K562 (cell line): ENCODE measurements at regions of chr17 and their contacts with region 1.

Region 1: GRCh38 chr17:82518826-82519810 is at the start of gene FOXK2:
- DNase-seq: peak; percentile 96 to 100 (median 100)
- ATAC-seq: peak; percentile 97
- H3K4me3 ChIP-seq: peak within 1 kb of the TSS; percentile 94
- H3K27ac ChIP-seq: peak within 1 kb of the TSS; percentile 98
- H3K4me1 ChIP-seq: peaks cover 12 to 19% of the 10 kb centered on the region in 2 experiments; a peak in 4 of 5 replicates
- H3K27me3 ChIP-seq: no peaks in the 10 kb centered on the region
- CTCF ChIP-seq: no peak
- EP300 ChIP-seq: no peak
- POLR2A ChIP-seq: peak; percentile 58
- RAD21 ChIP-seq: no peak
- polyA plus RNA-seq, gene FOXK2: 3.0 to 4.2 TPM

Region 2: GRCh38 chr17:82283208-82283749 is 235.8 kb before region 1 on chr17:
- CTCF ChIA-PET with region 1: no interaction called
- POLR2A ChIA-PET with region 1: no interaction called
- in situ Hi-C with region 1: no loop called
- intact Hi-C with region 1: no loop called
- DNase-seq: peak in 2 of 4 experiments; percentile 50 to 54
- ATAC-seq: peak; percentile 17; the same call in 2 of the 3 replicates
- H3K4me3 ChIP-seq: no peak overlapping the region
- H3K27ac ChIP-seq: no peak overlapping the region
- H3K4me1 ChIP-seq: peaks cover 21 to 53% of the 10 kb centered on the region in 2 experiments
- H3K27me3 ChIP-seq: no peaks in the 10 kb centered on the region
- CTCF ChIP-seq: no peak
- EP300 ChIP-seq: no peak
- POLR2A ChIP-seq: no peak
- RAD21 ChIP-seq: no peak

Region 3: GRCh38 chr17:82457997-82458864 is 60.9 kb before region 1 on chr17 and contains the start of gene NARF:
- CTCF ChIA-PET with region 1: no interaction called
- POLR2A ChIA-PET with region 1: interaction called, 5 read pairs
- in situ Hi-C with region 1: no loop called
- intact Hi-C with region 1: loop called (anchors 1 kb)
- DNase-seq: peak; percentile 95 to 99 (median 97)
- ATAC-seq: peak; percentile 95
- H3K4me3 ChIP-seq: peak within 1 kb of the TSS; percentile 83
- H3K27ac ChIP-seq: peak within 1 kb of the TSS; percentile 97
- H3K4me1 ChIP-seq: peaks cover 49 to 67% of the 10 kb centered on the region in 2 experiments
- H3K27me3 ChIP-seq: no peaks in the 10 kb centered on the region
- CTCF ChIP-seq: no peak
- EP300 ChIP-seq: no peak
- POLR2A ChIP-seq: peak; percentile 98
- RAD21 ChIP-seq: peak; percentile 12 to 16; a peak in 2 of 4 replicates
- polyA plus RNA-seq, gene NARF: 60.4 to 114 TPM

Region 4: GRCh38 chr17:82468692-82469091 is 50.4 kb before region 1 on chr17:
- CTCF ChIA-PET with region 1: no interaction called
- POLR2A ChIA-PET with region 1: no interaction called
- in situ Hi-C with region 1: no loop called
- intact Hi-C with region 1: no loop called
- DNase-seq: no peak
- ATAC-seq: no peak
- H3K4me3 ChIP-seq: no peak overlapping the region
- H3K27ac ChIP-seq: no peak overlapping the region; the same call in 2 of the 3 replicates
- H3K4me1 ChIP-seq: peaks cover 14 to 15% of the 10 kb centered on the region in 2 experiments; a peak in 4 of 5 replicates
- H3K27me3 ChIP-seq: no peaks in the 10 kb centered on the region; a peak in 1 of 5 replicates
- CTCF ChIP-seq: no peak
- EP300 ChIP-seq: no peak
- POLR2A ChIP-seq: no peak
- RAD21 ChIP-seq: no peak

Region 5: GRCh38 chr17:82502207-82502606 is 16.9 kb before region 1 on chr17:
- CTCF ChIA-PET with region 1: no interaction called
- POLR2A ChIA-PET with region 1: interaction called, 12 read pairs
- in situ Hi-C with region 1: no loop called
- intact Hi-C with region 1: no loop called
- DNase-seq: no peak
- ATAC-seq: no peak
- H3K4me3 ChIP-seq: no peak overlapping the region
- H3K27ac ChIP-seq: no peak overlapping the region
- H3K4me1 ChIP-seq: peaks cover 3 to 20% of the 10 kb centered on the region in 2 experiments; a peak in 3 of 5 replicates
- H3K27me3 ChIP-seq: no peaks in the 10 kb centered on the region
- CTCF ChIP-seq: no peak
- EP300 ChIP-seq: no peak
- POLR2A ChIP-seq: no peak
- RAD21 ChIP-seq: no peak

Region 6: GRCh38 chr17:82536512-82537201 is 17.5 kb after region 1 on chr17:
- CTCF ChIA-PET with region 1: interaction called, 3 read pairs
- POLR2A ChIA-PET with region 1: interaction called, 16 read pairs
- in situ Hi-C with region 1: no loop called
- intact Hi-C with region 1: no loop called
- DNase-seq: no peak
- ATAC-seq: no peak
- H3K4me3 ChIP-seq: no peak overlapping the region
- H3K27ac ChIP-seq: peak overlapping the region; percentile 38; the same call in 1 of the 3 replicates
- H3K4me1 ChIP-seq: peaks cover 14 to 28% of the 10 kb centered on the region in 2 experiments
- H3K27me3 ChIP-seq: no peaks in the 10 kb centered on the region
- CTCF ChIP-seq: no peak
- EP300 ChIP-seq: no peak
- POLR2A ChIP-seq: no peak
- RAD21 ChIP-seq: no peak